Posterior vena cava (tissue), 2 donors: ENCODE measurements at regions of chr1 and their contacts with region 1.

Region 1: GRCh38 chr1:8807004-8807403 is 10.4 kb downstream of the RERE start:
- DNase-seq: no peak

Region 2: DNA sequence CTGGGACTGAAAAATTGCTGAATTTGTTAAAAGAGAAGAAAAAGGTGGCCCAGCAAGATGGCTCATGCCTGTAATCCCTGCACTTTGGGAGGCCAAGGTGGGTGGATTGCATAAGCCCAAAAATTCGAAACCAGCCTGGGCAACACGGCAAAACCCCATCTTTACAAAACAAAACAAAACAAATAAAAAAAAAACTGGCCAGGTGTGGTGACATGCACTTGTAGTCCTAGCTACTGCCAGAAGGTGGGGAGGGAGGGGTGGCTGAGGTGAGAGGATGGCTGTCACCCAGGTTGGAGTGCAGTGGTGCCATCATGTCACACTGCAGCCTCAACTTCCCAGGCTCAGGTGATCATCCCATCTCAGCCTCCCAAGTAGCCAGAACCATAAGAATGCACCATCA is 12.4 kb before region 1 on chr1:
- intact Hi-C with region 1: loop called in 1 of 2 experiments (anchors 1 kb)
- DNase-seq: no peak